ENCODE measurements at regions of chr3 and their contacts with region 1.

Region 1: GRCh38 chr3:52123106-52123725 is 31.0 kb downstream of the POC1A start:
- DNase-seq: peak; percentile 65
- H3K4me3 Mint-ChIP-seq: no peak overlapping the region
- H3K27ac Mint-ChIP-seq: no peak overlapping the region
- H3K4me1 Mint-ChIP-seq: peaks cover 34% of the 10 kb centered on the region
- H3K27me3 Mint-ChIP-seq: no peaks in the 10 kb centered on the region

Region 2: DNA sequence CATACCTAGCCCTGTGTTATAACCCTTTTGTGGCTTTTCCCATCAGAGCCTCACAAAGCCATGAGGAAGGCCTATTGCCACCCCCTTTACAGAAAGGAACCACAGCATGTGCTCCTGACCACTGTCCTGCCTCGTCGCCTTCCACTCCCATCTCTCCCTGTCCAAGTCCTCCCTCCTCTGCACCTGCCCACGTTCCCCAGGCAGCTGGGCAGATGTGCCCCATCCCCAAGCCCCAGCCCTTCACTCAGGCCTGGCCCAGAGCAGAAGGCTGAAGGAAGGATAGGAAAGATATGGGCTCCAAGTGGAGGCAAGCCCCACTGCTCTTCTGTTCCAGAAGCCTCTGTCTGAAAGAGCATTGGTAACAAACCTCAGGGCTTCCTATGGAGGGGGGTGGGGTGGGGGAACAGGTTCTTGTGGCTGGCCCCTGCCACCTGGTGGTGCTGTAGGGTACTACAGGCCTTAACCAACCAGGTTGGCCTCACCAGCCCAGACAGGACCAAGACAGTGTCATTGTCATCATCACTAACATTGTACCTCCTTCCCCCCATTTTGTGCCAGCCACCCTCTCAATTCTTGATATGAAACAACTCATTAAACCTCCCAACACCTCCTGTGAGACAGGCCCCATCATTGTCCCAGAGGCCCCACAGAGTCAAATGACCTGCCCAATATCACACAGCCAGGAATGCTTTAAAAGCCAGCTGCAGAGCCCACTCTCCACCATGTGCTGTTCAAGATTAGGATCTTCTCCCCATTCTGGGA is 21.0 kb after region 1 on chr3:
- intact Hi-C with region 1: loop called (anchors 1 kb)
- DNase-seq: peak; percentile 71
- H3K4me3 Mint-ChIP-seq: no peak overlapping the region
- H3K27ac Mint-ChIP-seq: peak overlapping the region; percentile 18
- H3K4me1 Mint-ChIP-seq: peaks cover 14% of the 10 kb centered on the region
- H3K27me3 Mint-ChIP-seq: no peaks in the 10 kb centered on the region

Region 3: GRCh38 chr3:52645549-52645948 is 522.3 kb after region 1 on chr3:
- intact Hi-C with region 1: no loop called
- DNase-seq: no peak
- H3K4me3 Mint-ChIP-seq: no peak overlapping the region
- H3K27ac Mint-ChIP-seq: no peak overlapping the region
- H3K4me1 Mint-ChIP-seq: peaks cover 3% of the 10 kb centered on the region
- H3K27me3 Mint-ChIP-seq: no peaks in the 10 kb centered on the region